Activated T-helper 2 cell treated with anti-CD3 and anti-CD28 coated beads, Interferon-gamma antibody, Interleukin-2, Interleukin-4, amounts not matched to agents 10 μg/mL and 5 μg/mL and 100 μg/mL, durations not matched to agents 14 hours and 24 hours and 36 hours (primary cell): ENCODE measurements at regions of chr6 and their contacts with region 1.

Region 1: GRCh38 chr6:20186981-20187380 is 25.3 kb downstream of the MBOAT1 start:
- DNase-seq: no peak
- H3K4me3 Mint-ChIP-seq: no peak overlapping the region
- H3K27ac Mint-ChIP-seq: peak overlapping the region; percentile 56
- H3K4me1 Mint-ChIP-seq: peaks cover 59% of the 10 kb centered on the region
- H3K27me3 Mint-ChIP-seq: no peaks in the 10 kb centered on the region

Region 2: DNA sequence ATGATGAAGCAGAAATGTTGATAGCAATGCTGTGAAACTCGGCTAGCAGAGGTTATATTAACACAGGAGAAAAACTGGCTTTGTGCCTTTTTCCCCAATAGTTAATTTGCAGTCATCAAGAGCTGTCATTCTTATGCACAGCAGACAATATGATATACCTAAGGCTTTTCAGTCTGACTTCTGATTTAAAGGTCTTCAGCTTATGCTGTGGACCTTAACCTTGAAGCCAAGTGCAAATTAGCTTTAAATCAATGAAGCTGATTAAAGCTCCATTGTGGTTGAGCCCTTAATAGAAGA is 521.4 kb before region 1 on chr6:
- intact Hi-C with region 1: no loop called
- DNase-seq: no peak
- H3K4me3 Mint-ChIP-seq: no peak overlapping the region
- H3K27ac Mint-ChIP-seq: no peak overlapping the region
- H3K4me1 Mint-ChIP-seq: no peaks in the 10 kb centered on the region
- H3K27me3 Mint-ChIP-seq: no peaks in the 10 kb centered on the region

Region 3: GRCh38 chr6:20173833-20174792 is 12.9 kb before region 1 on chr6:
- intact Hi-C with region 1: loop called (anchors 1 kb)
- DNase-seq: no peak
- H3K4me3 Mint-ChIP-seq: peak overlapping the region; percentile 45
- H3K27ac Mint-ChIP-seq: peak overlapping the region; percentile 51
- H3K4me1 Mint-ChIP-seq: peaks cover 44% of the 10 kb centered on the region
- H3K27me3 Mint-ChIP-seq: no peaks in the 10 kb centered on the region

Region 4: GRCh38 chr6:20202324-20202658 is 15.3 kb after region 1 on chr6:
- intact Hi-C with region 1: loop called (anchors 1 kb)
- DNase-seq: no peak
- H3K4me3 Mint-ChIP-seq: no peak overlapping the region
- H3K27ac Mint-ChIP-seq: peak overlapping the region; percentile 96
- H3K4me1 Mint-ChIP-seq: peaks cover 73% of the 10 kb centered on the region
- H3K27me3 Mint-ChIP-seq: no peaks in the 10 kb centered on the region